Activated T-helper 1 cell treated with anti-CD3 and anti-CD28 coated beads, Interleukin-12 subunit alpha, Interleukin-12 subunit beta, Interleukin-2, Interleukin-4 antibody, amounts not matched to agents 30 ng/mL and 10 ng/mL and 1 ng/mL, durations not matched to agents 14 hours and 24 hours and 36 hours (primary cell): ENCODE measurements at regions of chr19 and their contacts with region 1.

Region 1: DNA sequence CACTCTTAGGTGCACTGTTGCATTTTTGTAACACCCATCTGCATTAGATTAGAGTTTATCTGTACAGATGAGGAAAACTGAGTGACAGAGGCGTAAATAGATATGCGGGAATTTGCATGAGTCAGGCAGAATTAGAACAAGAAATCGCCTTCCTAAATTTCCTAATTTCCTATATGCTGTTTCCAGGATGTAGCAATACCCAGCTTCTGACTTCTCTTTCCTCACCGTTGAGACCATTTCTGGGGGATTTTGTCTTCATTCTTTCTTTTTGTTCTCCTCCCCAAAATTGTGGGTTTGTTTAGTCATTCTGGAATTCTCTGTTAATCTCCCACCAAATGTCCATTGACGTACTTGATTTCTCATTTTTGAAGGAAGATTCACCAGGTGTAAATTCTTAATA is 10.6 kb upstream of the ZNF792 start:
- DNase-seq: no peak
- H3K4me3 Mint-ChIP-seq: no peak overlapping the region
- H3K27ac Mint-ChIP-seq: no peak overlapping the region
- H3K4me1 Mint-ChIP-seq: peaks cover 13% of the 10 kb centered on the region
- H3K27me3 Mint-ChIP-seq: peaks cover 4% of the 10 kb centered on the region

Region 2: DNA sequence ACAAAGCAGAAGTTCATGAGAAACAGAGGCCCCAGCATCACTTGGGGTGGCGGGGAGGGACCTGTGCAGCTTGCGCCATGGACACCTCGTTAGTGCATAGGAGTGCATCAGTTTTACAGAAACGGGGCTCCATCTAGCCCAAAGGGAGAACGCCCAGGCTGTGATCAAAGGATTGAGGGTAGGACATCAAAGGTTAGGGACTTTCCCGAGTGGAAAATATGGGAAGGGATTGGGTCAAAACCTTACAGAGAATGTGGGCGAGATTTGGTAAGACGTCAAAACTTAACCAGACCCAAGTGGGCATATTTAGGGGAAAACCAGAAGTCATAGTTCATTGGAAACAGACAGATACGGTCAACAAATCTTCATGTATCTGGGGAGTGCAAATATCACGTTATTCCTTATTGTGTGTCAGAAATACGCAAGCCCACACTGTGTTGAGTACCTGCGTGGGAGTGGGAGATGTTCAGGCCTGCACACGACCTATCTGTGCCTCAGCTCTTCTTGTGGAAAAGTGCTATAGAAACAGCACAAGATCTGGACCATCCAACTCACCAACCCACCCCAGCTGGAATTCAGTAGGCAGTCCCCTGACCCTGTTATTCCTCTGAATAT is 16.0 kb after region 1 on chr19:
- intact Hi-C with region 1: loop called (anchors 1 kb)
- DNase-seq: no peak
- H3K4me3 Mint-ChIP-seq: peak overlapping the region; percentile 35
- H3K27ac Mint-ChIP-seq: peak overlapping the region; percentile 83
- H3K4me1 Mint-ChIP-seq: peaks cover 33% of the 10 kb centered on the region
- H3K27me3 Mint-ChIP-seq: peaks cover 2% of the 10 kb centered on the region

Region 3: GRCh38 chr19:35013031-35013819 is 38.6 kb after region 1 on chr19:
- intact Hi-C with region 1: loop called (anchors 1 kb)
- DNase-seq: peak; percentile 59
- H3K4me3 Mint-ChIP-seq: peak overlapping the region; percentile 57
- H3K27ac Mint-ChIP-seq: peak overlapping the region; percentile 74
- H3K4me1 Mint-ChIP-seq: peaks cover 49% of the 10 kb centered on the region
- H3K27me3 Mint-ChIP-seq: no peaks in the 10 kb centered on the region

Region 4: DNA sequence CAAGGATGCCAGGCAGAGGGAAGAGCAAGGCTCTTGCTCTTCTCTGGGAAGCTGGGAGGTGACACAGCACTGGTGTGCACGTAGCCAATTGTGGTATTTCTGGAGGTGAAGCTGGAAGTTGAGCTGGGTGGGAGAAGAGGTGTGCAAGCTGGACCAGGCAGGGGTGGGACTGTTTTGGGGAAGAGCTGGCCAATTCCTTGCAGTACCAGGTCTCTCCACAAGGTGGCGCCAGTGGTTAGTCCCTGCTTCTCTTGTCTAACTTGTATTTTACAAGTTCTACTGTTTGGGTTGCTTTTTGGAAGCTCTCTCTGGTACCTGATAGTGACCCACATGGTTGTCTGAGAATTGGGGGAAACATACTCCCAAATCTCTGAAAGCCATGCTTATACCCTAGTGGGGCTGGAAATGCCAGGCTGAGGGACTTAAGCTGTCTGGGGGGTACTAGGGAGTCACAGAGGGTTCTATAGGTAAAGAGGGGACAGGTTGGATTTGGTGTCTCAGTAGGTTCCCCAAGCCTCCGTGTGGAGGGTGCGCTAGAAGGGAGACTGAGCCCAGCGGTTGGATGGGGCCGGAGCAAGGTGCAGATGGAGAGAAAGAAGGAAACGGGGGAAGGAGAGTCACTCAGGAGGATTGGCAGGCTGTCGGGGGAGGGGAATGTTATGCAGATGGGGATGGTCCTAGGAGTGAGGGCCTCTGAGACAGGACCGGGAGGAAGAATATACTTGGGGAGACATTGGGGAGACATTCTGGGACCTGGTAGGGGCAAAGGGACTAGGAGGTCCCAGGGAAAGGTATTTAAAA is 69.9 kb after region 1 on chr19:
- intact Hi-C with region 1: loop called (anchors 1 kb)
- DNase-seq: peak; percentile 32
- H3K4me3 Mint-ChIP-seq: no peak overlapping the region
- H3K27ac Mint-ChIP-seq: no peak overlapping the region
- H3K4me1 Mint-ChIP-seq: peaks cover 28% of the 10 kb centered on the region
- H3K27me3 Mint-ChIP-seq: peaks cover 9% of the 10 kb centered on the region